ENCODE measurements at regions of chr5 and their contacts with region 1.

Region 1: GRCh38 chr5:38809388-38810359 is 36.1 kb upstream of the OSMR start:
- DNase-seq: peak; percentile 66 to 97 (median 84)

Region 2: DNA sequence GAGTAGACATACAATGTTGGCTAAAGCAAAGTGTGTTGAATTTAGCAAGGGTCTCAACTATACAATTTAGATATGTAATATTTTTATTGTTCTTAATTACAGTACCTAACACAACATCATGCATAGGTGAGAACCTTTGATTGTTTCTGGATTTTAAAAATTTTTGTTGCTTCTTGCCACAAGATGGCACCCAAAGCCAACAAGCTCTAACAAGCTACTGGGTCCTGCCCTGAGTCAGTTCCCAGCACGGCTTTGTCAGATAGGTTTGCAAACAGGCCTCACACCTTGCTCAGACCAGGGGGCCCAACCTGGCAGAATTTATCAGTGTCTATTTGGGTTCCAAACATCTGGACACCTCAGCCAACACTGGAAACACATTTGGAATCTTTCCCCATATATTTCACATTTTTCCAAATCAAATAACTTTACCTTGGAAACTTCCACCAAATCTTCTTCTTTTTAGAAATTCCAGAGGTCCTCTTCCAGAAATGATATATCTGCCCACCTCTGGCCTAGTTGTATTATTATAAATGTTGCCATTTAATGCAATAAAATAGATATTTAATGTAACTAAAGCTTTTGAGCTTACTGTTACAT is 600.8 kb before region 1 on chr5:
- intact Hi-C with region 1: loop called (anchors 10 kb)
- DNase-seq: peak in 4 of 10 donors; percentile 30 to 87 (median 34)

Region 3: DNA sequence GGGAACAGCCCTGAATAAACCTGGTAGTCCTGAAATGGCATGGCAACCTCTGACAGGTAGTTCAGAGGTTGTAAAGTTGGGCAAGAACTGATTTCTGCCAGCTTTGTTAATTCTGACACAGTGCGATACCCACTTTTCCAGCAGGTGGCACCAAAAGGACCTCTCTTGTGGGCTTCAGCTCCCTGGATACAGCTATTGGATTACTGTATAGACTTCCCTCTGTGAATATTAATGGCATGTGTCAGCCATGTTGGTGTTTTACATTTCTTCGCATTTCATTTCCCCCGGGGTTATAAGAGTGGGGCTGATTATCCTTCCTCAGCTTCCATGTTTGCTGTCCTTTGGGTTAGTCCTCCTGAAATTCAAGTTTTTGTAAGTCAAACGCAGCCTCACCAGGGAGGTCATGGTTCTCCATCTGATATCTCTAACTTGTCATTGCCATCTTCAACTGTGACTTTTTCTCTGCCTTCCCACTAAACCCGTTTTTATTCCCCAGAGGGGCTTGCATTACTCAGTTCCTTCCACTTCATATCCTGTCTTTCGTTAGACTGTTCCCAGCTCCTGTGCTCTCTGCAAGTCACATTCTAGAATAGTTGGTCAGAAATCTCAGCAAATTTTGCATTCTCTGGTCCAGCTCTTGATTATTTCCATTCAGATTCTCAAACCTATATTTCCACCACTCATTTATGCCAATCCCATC is 388.8 kb before region 1 on chr5:
- intact Hi-C with region 1: loop called (anchors 1 kb)
- DNase-seq: peak in 6 of 10 donors; percentile 44 to 88 (median 62)

Region 4: DNA sequence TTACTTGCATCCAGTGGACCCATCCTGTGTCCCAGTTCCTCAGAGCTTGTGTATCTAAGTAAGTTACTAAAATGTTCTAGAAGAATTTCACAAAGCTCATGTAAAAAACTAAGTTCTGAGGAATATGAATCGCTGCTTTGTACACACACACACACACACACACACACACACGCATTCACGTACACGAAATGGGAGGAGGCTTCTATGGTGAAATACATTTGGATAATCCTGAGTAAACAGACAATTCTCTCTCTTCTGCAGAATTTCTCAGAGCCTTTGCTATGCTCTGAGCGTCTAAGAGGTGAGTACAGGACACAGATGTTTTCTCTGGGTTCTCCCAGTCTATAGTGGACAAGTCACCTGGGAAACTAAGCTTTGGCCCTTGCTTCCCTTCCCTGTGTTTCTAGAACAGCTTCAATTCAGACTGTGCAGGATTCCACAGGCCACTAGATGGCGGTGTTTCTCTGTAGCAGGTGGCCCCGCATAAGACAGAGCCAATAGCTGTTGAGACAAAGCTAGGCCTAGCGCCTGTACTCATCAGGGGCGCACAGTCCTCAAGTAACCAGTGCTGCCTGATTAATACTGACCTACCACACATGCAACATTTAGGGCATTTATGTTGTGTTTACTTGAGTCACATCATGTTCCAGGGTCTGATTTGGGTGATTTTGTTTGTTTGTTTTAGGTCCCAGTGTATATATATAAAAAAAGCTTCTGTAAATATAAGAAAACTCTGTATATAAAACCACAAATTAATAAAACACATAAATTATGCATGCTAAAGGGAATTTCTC is 368.0 kb before region 1 on chr5:
- intact Hi-C with region 1: loop called (anchors 1 kb)
- DNase-seq: peak; percentile 74 to 98 (median 92)

Region 5: GRCh38 chr5:38556599-38557305 is 252.9 kb before region 1 on chr5 and contains the start of gene LIFR:
- intact Hi-C with region 1: loop called (anchors 5 kb)
- DNase-seq: peak; percentile 72 to 97 (median 82)

Region 6: DNA sequence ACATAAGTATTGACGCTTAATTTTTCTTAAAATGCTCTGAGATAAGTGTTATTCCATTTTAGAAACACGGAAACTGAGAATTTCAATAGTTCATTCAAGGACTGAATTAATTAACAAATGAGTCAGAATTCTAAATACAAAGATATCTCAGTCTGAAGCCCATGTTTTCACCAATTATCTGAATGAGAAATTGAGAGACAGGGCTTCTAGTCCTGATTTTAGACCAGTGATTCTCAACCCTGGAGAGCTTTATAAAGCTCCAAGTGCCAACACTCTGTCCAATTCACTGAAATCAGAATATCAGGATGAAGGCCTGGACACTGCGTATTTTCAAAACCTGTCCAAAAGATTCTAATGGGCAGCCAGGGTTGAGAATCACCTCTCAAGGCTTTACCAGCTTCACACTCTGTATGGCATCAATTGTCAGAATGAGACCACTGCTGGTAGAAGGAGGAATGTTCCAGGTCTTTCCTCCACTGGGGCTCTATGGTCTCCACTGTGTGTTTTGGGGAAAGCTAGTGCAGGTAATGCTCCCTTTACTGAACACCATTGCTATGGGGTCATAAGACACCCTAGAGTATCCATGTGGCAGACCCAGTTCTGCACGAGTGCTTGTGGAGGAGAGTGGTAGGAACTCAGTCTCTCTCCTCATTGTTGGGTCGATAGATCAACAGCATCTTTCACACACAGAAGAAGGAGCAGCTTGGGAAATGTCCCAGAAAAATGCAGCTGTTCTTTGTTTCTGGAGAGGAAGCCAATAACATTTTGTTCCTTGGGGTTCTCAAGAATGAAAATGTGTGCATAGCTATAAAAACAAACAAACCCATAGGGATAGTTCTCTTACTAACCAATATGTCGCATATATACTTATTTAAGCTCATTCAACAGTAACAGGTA is 63.6 kb before region 1 on chr5:
- intact Hi-C with region 1: no loop called
- DNase-seq: peak in 1 of 10 donors; percentile 30